ENCODE measurements at regions of chr3 and their contacts with region 1.

Region 1: DNA sequence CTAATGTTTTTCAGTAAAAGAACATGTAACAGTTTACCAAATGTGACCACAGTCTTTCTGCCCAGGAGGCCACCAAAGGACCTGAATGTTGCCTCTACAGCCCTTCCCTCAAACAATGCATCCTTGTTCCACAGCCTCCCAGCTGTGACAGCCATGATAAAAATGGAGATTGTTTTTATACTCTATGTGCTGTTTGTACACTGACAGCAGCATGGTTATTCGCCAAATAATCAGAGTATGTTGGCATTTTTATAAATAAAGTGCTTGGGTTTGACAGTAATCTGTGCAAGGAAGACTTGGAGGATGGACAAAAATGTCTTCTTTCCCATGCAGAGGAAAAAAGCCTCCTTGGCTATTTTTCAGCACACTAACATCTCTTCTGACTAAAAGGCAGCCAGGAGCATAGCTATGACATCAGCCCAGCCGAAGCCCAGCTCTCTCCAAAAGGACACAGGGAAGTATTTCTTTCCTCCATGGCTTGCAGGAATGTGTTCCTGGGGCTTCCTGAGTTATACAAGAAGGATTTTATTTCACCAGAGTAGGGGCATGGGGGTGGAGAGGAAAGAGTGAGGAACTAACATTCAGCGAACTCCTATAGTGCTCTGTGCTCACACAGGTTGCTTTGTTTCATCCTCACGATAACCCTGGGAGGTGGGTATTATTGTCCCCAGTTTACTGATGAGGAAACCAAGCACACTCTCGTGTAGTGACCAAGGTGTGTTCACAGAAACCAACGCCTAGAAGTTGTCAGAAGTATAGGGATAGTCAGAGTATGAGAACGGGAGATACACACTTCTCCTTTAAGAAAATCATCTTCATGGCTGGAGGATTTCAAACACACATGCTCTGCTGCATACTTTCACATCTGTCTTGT is 339.7 kb downstream of the MECOM start:
- DNase-seq: peak in 3 of 5 donors; percentile 23 to 43 (median 41)
- ATAC-seq: peak; percentile 70 to 87 (median 84)
- H3K4me3 ChIP-seq: peak overlapping the region in 6 of 12 donors; percentile 2 to 35 (median 24)
- H3K27ac ChIP-seq: peak overlapping the region in 11 of 12 donors; percentile 12 to 64 (median 49)
- H3K4me1 ChIP-seq: peaks cover 0 to 26% (median 11%) of the 10 kb centered on the region in 12 donors
- H3K27me3 ChIP-seq: no peaks in the 10 kb centered on the region
- CTCF ChIP-seq: no peak
- POLR2A ChIP-seq: no peak

Region 2: DNA sequence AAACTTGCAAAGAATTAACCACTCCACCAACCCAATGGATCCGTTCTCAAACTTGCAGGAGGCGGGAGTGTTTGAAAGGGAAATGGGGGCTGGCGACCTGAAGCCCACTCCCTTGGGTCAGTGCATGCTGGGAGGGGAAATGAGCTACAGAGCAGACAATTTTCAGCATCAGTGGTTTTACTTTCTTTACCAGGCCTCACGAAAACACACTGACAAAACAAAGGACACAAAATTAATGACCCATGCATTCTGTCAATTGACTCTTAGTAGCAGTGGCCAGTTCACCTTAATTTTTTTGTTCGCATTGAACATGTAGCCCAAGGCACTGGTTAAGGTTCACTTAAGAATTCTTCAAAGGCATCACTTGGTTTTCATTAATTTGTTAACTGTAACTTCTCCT is 73.8 kb before region 1 on chr3:
- intact Hi-C with region 1: loop called in 1 of 10 experiments (anchors 2 kb)
- DNase-seq: no peak
- ATAC-seq: no peak
- H3K4me3 ChIP-seq: no peak overlapping the region
- H3K27ac ChIP-seq: no peak overlapping the region
- H3K4me1 ChIP-seq: peaks cover 0 to 8% (median 0%) of the 10 kb centered on the region in 12 donors
- H3K27me3 ChIP-seq: no peaks in the 10 kb centered on the region
- CTCF ChIP-seq: no peak
- POLR2A ChIP-seq: no peak

Region 3: DNA sequence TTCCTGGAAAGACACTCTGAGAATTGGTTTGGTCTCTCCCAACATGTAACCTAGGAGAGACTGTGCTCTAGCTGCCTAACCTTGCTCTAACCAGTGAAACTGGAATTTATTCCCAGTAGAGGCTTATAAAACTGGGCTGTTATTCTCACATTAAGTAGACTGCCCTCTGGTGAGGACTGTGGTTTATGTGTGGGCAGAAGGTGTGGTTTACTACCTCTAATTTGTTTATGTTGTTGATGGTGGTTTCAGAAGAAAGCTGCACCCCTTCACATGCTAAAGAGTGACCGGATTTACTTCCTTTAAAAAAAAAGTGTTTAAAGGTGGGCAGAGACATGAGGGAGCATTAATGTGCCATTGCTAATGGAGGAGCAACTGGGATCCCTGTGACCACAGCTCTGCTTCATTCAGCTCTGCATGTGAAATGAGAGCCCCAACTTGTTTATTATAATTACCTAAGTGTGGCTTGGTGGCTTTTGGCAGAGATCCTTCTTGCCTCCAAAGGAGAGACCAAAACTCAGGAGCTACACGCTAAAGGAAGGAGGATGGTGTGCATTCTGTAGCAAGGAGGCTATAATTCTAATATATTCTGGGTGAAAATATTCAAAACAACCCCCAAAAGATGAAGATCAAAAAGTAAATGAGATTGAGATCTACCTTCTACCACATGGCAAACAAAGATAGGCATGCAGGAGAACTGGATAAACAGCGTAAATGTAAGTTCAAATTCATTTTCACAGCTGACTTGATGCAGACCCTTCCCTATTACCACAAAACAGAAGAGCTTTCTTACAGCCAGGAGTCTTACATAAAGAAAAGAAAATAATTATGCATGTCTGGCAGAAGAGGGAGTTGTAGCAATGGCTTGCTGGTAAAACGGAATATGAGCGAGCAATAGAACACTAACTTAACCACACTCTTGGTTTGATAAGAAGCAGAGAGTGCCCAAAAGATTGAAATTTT is 66.7 kb after region 1 on chr3:
- intact Hi-C with region 1: loop called in 1 of 10 experiments (anchors 10 kb)
- DNase-seq: no peak
- ATAC-seq: no peak
- H3K4me3 ChIP-seq: no peak overlapping the region
- H3K27ac ChIP-seq: peak overlapping the region in 4 of 12 donors; percentile 21 to 59 (median 32)
- H3K4me1 ChIP-seq: peaks cover 0 to 39% (median 16%) of the 10 kb centered on the region in 12 donors
- H3K27me3 ChIP-seq: no peaks in the 10 kb centered on the region
- CTCF ChIP-seq: peak in 4 of 12 donors; percentile 9 to 30 (median 26)
- POLR2A ChIP-seq: no peak

Measured in heart left ventricle (tissue), 16 donors.